Activated T-helper 2 cell treated with anti-CD3 and anti-CD28 coated beads, Interferon-gamma antibody, Interleukin-2, Interleukin-4, amounts not matched to agents 10 μg/mL and 5 μg/mL and 100 μg/mL, durations not matched to agents 14 hours and 24 hours and 36 hours (primary cell): ENCODE measurements at regions of chr12 and their contacts with region 1.

Region 1: GRCh38 chr12:98561846-98562245 is 31.6 kb upstream of the SLC25A3 start:
- DNase-seq: no peak
- H3K4me3 Mint-ChIP-seq: no peak overlapping the region
- H3K27ac Mint-ChIP-seq: no peak overlapping the region
- H3K4me1 Mint-ChIP-seq: peaks cover 4% of the 10 kb centered on the region
- H3K27me3 Mint-ChIP-seq: no peaks in the 10 kb centered on the region

Region 2: GRCh38 chr12:98352835-98353234 is 209.0 kb before region 1 on chr12:
- intact Hi-C with region 1: no loop called
- DNase-seq: no peak
- H3K4me3 Mint-ChIP-seq: no peak overlapping the region
- H3K27ac Mint-ChIP-seq: no peak overlapping the region
- H3K4me1 Mint-ChIP-seq: no peaks in the 10 kb centered on the region
- H3K27me3 Mint-ChIP-seq: peaks cover 15% of the 10 kb centered on the region

Region 3: DNA sequence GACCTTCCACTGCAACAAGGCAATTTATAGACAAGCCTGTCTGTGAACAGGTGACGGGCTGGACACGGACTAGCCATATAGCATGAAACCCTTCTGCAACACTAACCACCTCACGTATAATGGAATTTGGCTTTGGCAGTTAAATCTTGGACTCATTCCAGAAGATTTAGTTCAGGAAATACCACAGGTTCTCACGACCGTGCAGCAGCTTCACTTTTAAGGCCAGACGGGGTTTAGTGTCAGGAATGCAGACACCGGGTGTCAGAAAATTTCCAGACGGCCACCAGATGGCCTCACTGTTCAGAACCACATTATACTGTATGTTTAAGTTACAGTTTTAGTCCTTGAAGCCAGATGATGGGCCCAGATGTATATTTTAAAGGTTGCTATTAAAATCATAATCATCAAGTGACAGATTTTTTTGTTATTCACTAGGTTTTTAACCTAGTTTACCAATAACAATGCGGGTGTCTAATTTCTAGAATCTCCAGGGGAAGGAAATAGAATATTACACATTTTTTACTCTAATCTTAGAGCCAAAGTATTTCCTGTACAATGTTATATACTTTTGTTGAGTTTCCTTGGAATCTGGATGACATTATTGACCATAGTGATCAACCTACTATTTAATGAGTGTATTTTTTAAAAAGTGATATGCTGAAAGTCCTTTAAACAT is 137.0 kb before region 1 on chr12:
- intact Hi-C with region 1: no loop called
- DNase-seq: peak; percentile 26
- H3K4me3 Mint-ChIP-seq: no peak overlapping the region
- H3K27ac Mint-ChIP-seq: no peak overlapping the region
- H3K4me1 Mint-ChIP-seq: peaks cover 5% of the 10 kb centered on the region
- H3K27me3 Mint-ChIP-seq: no peaks in the 10 kb centered on the region

Region 4: DNA sequence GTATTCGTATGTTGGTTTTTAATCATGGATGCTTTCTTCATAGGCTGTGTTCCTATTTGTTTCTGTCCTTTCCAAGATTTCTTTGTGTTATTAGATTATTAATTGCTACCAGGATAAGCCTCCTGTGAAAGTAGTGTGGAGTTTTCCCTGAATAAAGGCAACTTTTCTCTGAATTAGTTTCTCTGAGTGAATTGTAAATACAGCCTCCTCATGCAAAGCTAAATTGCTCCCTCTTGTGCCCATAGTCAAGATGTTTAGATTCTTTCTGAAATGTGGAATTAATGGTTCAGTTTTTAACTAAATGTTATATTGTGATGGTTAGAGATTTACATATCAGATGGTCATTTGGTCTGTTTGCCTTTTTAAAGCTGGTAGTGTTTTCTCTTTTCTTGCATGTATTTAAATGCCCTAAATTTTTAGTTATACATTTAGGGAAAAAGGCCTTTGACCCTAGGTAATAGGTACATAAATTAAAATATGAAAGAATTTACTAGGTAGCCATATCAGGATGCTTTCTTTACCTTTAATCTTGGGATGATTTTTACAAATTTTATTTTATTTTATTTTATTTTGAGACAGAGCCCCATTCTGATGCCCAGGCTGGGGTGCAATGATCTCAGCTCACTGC is 92.1 kb after region 1 on chr12:
- intact Hi-C with region 1: loop called (anchors 1 kb)
- DNase-seq: no peak
- H3K4me3 Mint-ChIP-seq: no peak overlapping the region
- H3K27ac Mint-ChIP-seq: no peak overlapping the region
- H3K4me1 Mint-ChIP-seq: peaks cover 20% of the 10 kb centered on the region
- H3K27me3 Mint-ChIP-seq: no peaks in the 10 kb centered on the region